ENCODE measurements at regions of chr9 and their contacts with region 1.

Region 1: DNA sequence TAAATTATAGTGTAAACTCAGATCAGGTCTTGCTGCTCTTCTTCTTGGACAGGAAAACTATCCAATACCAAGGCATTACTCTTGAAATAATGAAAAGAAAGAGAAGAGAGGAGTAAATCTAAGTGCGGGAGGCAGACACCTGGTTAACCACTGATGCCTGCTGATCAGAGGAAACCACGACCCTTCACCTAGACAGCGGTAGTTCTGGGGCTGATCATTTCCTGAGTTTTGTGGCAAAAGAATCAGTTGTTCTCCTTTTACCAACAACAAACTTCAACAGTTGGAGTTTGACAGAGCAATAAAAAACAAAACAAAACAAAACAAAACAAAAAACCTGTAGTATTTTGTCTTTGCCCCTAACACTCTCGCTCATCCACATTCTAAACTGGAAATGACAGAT is 3.0 kb downstream of the RLN1 start:
- DNase-seq: no peak
- ATAC-seq: no peak
- H3K4me3 ChIP-seq: no peak overlapping the region
- H3K27ac ChIP-seq: no peak overlapping the region
- H3K4me1 ChIP-seq: no peaks in the 10 kb centered on the region
- H3K27me3 ChIP-seq: peaks cover 2% of the 10 kb centered on the region; the same call in 1 of the 2 replicates
- CTCF ChIP-seq: no peak
- POLR2A ChIP-seq: no peak
- RAD21 ChIP-seq: no peak

Region 2: DNA sequence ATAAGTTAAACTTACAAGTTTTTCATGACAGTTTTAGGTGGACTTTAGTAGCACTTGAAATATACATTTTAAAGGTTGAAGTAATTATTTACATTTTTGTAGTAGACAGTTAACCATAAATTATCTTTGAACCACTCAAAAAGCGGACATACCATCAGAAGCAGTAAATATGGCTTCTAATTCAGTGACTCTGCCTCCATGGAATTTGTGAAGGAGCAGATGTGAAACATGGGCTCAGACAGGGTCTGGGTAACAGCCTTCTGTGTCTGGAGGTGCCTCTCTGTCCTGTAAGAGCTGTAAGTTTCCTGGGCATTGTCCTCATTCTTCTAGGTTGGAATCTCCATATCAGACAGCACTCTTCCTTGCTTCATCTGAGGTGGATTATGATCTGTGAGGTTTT is 44.5 kb before region 1 on chr9:
- CTCF ChIA-PET with region 1: no interaction called
- POLR2A ChIA-PET with region 1: interaction called, 10 read pairs
- dilution Hi-C with region 1: no loop called
- in situ Hi-C with region 1: no loop called
- intact Hi-C with region 1: no loop called
- DNase-seq: no peak
- ATAC-seq: no peak
- H3K4me3 ChIP-seq: no peak overlapping the region
- H3K27ac ChIP-seq: no peak overlapping the region
- H3K4me1 ChIP-seq: no peaks in the 10 kb centered on the region
- H3K27me3 ChIP-seq: no peaks in the 10 kb centered on the region
- CTCF ChIP-seq: no peak
- POLR2A ChIP-seq: no peak
- RAD21 ChIP-seq: no peak

Region 3: GRCh38 chr9:5790923-5791322 is 454.2 kb after region 1 on chr9:
- CTCF ChIA-PET with region 1: no interaction called
- POLR2A ChIA-PET with region 1: no interaction called
- dilution Hi-C with region 1: no loop called
- in situ Hi-C with region 1: no loop called
- intact Hi-C with region 1: no loop called
- DNase-seq: no peak
- ATAC-seq: no peak
- H3K4me3 ChIP-seq: no peak overlapping the region
- H3K27ac ChIP-seq: no peak overlapping the region
- H3K4me1 ChIP-seq: peaks cover 5% of the 10 kb centered on the region; the same call in 1 of the 2 replicates
- H3K27me3 ChIP-seq: no peaks in the 10 kb centered on the region
- CTCF ChIP-seq: no peak
- POLR2A ChIP-seq: no peak
- RAD21 ChIP-seq: no peak